Sigmoid colon (tissue), 7 donors: ENCODE measurements at regions of chr13 and their contacts with region 1.

Region 1: DNA sequence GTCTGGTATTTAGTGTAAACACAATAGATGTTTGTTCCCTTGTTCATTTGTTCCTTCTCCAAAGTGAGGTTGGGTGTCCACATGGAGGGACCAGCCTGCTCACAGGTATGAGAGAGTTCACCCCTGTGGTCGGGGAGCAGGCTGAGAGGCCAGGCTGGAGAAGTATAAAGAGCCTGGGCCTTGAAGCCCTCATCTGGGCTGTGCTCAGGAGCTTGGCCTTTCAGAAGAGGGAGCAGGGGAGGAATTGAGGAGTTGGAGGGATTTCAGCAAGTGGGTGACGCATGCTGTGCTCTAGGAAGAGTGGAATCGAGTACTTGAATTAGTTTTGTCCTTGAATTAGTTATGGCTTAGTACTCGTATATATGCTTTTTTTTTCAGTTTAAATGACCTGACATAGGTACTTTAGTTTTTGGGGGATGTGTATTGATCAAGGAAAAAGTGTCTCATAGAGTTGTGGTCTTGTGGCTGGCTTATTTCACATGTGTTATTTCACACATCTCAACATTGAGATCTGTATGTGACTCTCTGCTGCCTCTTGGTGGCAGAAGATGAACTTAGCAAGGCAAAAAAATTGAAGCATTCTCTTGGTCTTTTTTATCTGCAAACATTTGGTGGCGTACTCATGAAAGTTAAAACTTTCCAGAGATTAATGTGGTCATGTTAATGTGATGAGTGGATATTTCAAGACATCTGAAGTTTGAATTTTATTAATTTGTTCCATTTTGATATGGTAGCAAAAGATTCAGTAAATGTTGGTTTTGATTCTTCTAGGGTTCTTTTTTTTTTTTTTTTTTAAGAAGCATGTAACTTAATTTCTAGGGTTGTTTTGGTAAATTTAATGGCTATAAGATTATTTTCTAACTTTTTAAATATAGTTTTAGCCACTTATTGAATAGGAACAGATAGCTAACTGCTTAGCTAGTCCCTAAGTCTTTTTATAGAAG is 54.3 kb downstream of the SLAIN1 start:
- DNase-seq: no peak
- H3K4me3 ChIP-seq: no peak overlapping the region
- H3K27ac ChIP-seq: no peak overlapping the region
- H3K4me1 ChIP-seq: no peaks in the 10 kb centered on the region
- H3K27me3 ChIP-seq: no peaks in the 10 kb centered on the region
- CTCF ChIP-seq: peak; percentile 39 to 69 (median 44)
- EP300 ChIP-seq: no peak
- POLR2A ChIP-seq: no peak

Region 2: GRCh38 chr13:77492982-77493381 is 258.8 kb before region 1 on chr13:
- intact Hi-C with region 1: loop called (anchors 10 kb)
- DNase-seq: no peak
- H3K4me3 ChIP-seq: no peak overlapping the region
- H3K27ac ChIP-seq: no peak overlapping the region
- H3K4me1 ChIP-seq: no peaks in the 10 kb centered on the region
- H3K27me3 ChIP-seq: no peaks in the 10 kb centered on the region
- CTCF ChIP-seq: peak in 1 of 4 experiments; percentile 15
- EP300 ChIP-seq: no peak
- POLR2A ChIP-seq: no peak

Region 3: GRCh38 chr13:77599351-77599750 is 152.4 kb before region 1 on chr13:
- intact Hi-C with region 1: loop called (anchors 5 kb)
- DNase-seq: no peak
- H3K4me3 ChIP-seq: no peak overlapping the region
- H3K27ac ChIP-seq: no peak overlapping the region
- H3K4me1 ChIP-seq: no peaks in the 10 kb centered on the region
- H3K27me3 ChIP-seq: peaks cover 0 to 3% (median 0%) of the 10 kb centered on the region in 3 donors
- CTCF ChIP-seq: no peak
- EP300 ChIP-seq: no peak
- POLR2A ChIP-seq: no peak

Region 4: DNA sequence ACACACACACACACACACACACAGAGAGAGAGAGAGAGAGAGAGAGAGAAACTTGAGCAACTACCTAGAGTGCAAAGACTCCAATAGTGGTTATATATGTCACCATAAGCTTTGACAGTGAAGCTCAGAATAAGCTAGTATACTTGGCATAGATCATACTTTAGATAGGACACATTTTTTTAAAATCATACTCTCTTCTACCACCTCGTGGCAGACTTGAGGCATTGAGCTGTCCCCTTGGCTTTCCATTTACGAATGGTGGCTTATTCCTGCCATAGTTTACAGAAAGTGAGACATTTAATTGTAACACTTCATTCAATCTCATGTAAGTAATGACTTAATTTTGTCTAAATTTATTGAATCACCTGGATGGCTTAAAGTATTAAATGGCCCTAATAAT is 58.6 kb after region 1 on chr13:
- intact Hi-C with region 1: no loop called
- DNase-seq: no peak
- H3K4me3 ChIP-seq: no peak overlapping the region
- H3K27ac ChIP-seq: no peak overlapping the region
- H3K4me1 ChIP-seq: no peaks in the 10 kb centered on the region
- H3K27me3 ChIP-seq: no peaks in the 10 kb centered on the region
- CTCF ChIP-seq: no peak
- EP300 ChIP-seq: no peak
- POLR2A ChIP-seq: no peak